ENCODE measurements at regions of chr2 and their contacts with region 1.

Region 1: DNA sequence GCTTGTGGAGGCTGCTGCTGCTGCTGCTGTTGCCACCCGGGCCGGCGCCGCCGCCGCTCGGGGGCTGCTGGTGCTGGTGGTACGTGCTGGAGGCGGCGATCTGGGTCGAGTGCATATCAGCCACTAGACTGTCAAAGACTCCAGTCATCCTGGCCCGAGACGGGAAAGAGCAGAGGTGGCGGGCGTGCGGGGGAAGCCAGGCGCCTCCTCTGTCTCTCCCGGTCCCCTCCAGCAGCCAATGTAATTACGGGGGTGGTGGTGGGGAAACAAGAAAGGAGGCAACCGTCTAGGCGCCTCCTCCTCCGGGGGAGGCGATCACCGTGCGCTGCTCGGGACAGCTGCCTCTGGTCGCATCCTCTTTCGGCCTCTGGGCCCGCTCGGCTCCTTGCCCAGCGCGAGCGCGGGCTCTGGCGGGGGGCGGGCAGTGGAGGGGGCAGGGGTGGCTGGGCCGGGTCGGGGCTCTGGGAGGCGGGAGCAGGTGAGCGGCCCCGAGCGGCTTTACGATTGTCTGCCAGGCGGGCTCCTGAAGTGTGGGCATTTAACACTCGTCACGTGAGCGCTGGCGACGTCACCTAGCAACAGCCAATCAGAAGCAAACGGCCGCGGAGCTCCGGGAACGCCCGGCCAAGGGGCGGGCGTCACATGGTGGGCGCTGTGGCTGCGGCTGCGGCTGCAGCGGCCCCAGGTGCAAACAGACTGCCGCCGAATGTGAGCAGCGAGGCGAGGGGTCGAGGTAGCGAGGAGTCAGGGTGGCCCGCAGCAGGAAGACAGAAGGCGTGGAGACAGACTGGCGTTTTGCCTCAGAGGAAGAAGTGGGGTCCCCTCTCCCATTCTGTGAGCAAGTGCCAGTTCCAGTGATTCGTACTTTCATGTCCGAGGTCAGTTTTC is at the start of gene DLX2:
- DNase-seq: peak; percentile 74
- H3K4me3 Mint-ChIP-seq: peak within 1 kb of the TSS; percentile 76
- H3K27ac Mint-ChIP-seq: peak within 1 kb of the TSS; percentile 24
- H3K4me1 Mint-ChIP-seq: peaks cover 50% of the 10 kb centered on the region
- H3K27me3 Mint-ChIP-seq: peaks cover 71% of the 10 kb centered on the region
- total RNA-seq, gene DLX2: not detected

Region 2: GRCh38 chr2:171574149-171574795 is 528.4 kb before region 1 on chr2:
- CTCF ChIA-PET with region 1: no interaction called
- intact Hi-C with region 1: loop called (anchors 2 kb)
- DNase-seq: peak; percentile 86
- H3K4me3 Mint-ChIP-seq: no peak overlapping the region
- H3K27ac Mint-ChIP-seq: peak overlapping the region; percentile 53
- H3K4me1 Mint-ChIP-seq: peaks cover 5% of the 10 kb centered on the region
- H3K27me3 Mint-ChIP-seq: no peaks in the 10 kb centered on the region

Region 3: GRCh38 chr2:171703574-171704347 is 398.9 kb before region 1 on chr2:
- CTCF ChIA-PET with region 1: interaction called, 24 read pairs
- intact Hi-C with region 1: loop called (anchors 1 kb)
- DNase-seq: peak; percentile 13
- H3K4me3 Mint-ChIP-seq: no peak overlapping the region
- H3K27ac Mint-ChIP-seq: peak overlapping the region; percentile 26
- H3K4me1 Mint-ChIP-seq: peaks cover 4% of the 10 kb centered on the region
- H3K27me3 Mint-ChIP-seq: no peaks in the 10 kb centered on the region

Region 4: DNA sequence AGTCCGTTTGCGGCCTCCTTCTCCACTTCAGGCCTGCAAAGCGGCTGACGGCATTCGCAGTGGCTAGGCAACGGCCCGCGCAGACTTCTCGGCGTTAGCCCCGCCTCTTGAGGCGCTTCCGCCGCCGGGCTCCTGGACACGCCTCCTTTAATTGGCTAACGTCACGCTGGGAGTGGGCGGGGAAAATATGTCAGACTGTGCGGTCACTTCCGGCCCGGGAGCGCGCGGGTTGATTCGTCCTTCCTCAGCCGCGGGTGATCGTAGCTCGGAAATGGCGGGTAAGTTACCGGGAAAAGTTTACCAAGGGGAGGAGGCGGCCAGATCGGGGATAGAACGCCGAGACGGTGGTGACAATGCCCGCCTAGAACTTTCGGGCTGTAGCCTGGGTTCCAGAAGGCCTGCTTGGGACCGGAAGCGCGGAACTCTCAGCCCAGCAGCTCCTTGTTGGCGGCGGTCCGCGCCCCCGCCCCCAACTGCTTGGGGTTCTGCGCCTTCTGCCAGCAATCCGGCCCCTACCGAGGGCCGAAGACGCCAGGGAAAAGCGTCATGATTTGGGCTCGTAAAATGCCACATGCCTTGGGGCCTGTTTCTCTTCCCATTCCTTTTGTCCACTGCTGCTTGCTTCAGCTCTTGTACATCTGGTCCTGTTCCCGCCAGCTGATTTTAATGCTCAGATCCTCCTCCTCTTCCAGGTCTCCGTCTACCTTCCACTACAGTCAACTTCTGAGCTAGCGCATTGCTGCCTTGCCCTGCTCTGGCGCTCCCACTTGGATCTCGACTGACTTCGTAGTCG is 180.2 kb before region 1 on chr2 and contains the start of gene HAT1:
- CTCF ChIA-PET with region 1: no interaction called
- intact Hi-C with region 1: loop called (anchors 1 kb)
- DNase-seq: peak; percentile 99
- H3K4me3 Mint-ChIP-seq: peak within 1 kb of the TSS; percentile 88
- H3K27ac Mint-ChIP-seq: peak within 1 kb of the TSS; percentile 97
- H3K4me1 Mint-ChIP-seq: peaks cover 34% of the 10 kb centered on the region
- H3K27me3 Mint-ChIP-seq: no peaks in the 10 kb centered on the region
- total RNA-seq, gene HAT1: 74.6 to 77.2 TPM

Region 5: GRCh38 chr2:171999604-172000469 is 102.8 kb before region 1 on chr2 and contains the start of gene METAP1D:
- CTCF ChIA-PET with region 1: no interaction called
- intact Hi-C with region 1: loop called (anchors 2 kb)
- DNase-seq: peak; percentile 88
- H3K4me3 Mint-ChIP-seq: peak within 1 kb of the TSS; percentile 94
- H3K27ac Mint-ChIP-seq: peak within 1 kb of the TSS; percentile 89
- H3K4me1 Mint-ChIP-seq: peaks cover 25% of the 10 kb centered on the region
- H3K27me3 Mint-ChIP-seq: no peaks in the 10 kb centered on the region
- total RNA-seq, gene METAP1D: 2.5 to 3.4 TPM

Region 6: GRCh38 chr2:172147944-172148650 is 45.5 kb after region 1 on chr2:
- CTCF ChIA-PET with region 1: no interaction called
- intact Hi-C with region 1: no loop called
- DNase-seq: no peak
- H3K4me3 Mint-ChIP-seq: no peak overlapping the region
- H3K27ac Mint-ChIP-seq: no peak overlapping the region
- H3K4me1 Mint-ChIP-seq: peaks cover 2% of the 10 kb centered on the region
- H3K27me3 Mint-ChIP-seq: peaks cover under 1% of the 10 kb centered on the region

Region 7: DNA sequence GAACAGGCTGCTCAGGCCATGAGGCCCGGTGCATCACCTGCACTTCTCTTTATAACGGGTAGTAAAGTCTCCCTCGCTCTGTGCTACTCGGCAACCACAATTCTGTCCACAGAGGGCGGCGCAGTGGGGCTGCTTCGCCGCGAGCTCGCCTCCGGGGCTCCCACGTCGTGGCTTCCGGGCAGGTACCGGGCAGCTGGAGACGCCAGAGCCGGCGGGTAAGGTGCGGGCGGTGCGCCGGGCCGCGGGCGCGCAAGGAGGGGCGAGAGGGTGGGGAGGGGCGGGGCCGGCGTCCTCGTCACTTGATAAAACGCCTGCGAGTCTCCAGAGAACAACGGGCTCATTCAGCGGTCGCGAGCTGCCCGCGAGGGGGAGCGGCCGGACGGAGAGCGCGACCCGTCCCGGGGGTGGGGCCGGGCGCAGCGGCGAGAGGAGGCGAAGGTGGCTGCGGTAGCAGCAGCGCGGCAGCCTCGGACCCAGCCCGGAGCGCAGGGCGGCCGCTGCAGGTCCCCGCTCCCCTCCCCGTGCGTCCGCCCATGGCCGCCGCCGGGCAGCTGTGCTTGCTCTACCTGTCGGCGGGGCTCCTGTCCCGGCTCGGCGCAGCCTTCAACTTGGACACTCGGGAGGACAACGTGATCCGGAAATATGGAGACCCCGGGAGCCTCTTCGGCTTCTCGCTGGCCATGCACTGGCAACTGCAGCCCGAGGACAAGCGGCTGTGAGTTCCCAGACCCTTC is 324.8 kb after region 1 on chr2 and contains the start of gene ITGA6:
- CTCF ChIA-PET with region 1: no interaction called
- intact Hi-C with region 1: no loop called
- DNase-seq: peak; percentile 79
- H3K4me3 Mint-ChIP-seq: peak within 1 kb of the TSS; percentile 81
- H3K27ac Mint-ChIP-seq: peak within 1 kb of the TSS; percentile 83
- H3K4me1 Mint-ChIP-seq: peaks cover 76% of the 10 kb centered on the region
- H3K27me3 Mint-ChIP-seq: no peaks in the 10 kb centered on the region
- total RNA-seq, gene ITGA6: 16.5 to 16.8 TPM

Region 8: GRCh38 chr2:172555522-172556283 is 453.1 kb after region 1 on chr2 and contains the start of gene PDK1:
- CTCF ChIA-PET with region 1: no interaction called
- intact Hi-C with region 1: loop called (anchors 5 kb)
- DNase-seq: peak; percentile 90
- H3K4me3 Mint-ChIP-seq: peak within 1 kb of the TSS; percentile 93
- H3K27ac Mint-ChIP-seq: peak within 1 kb of the TSS; percentile 94
- H3K4me1 Mint-ChIP-seq: peaks cover 53% of the 10 kb centered on the region
- H3K27me3 Mint-ChIP-seq: no peaks in the 10 kb centered on the region
- total RNA-seq, gene PDK1: 31.9 to 35.3 TPM